Activated B cell treated with CpG ODN at 0.5 μM for 24 hours (primary cell): ENCODE measurements at regions of chr2 and their contacts with region 1.

Region 1: GRCh38 chr2:55519938-55520885 is 694 bp downstream of the CFAP36 start:
- DNase-seq: peak; percentile 17
- ATAC-seq: peak; percentile 10
- H3K4me3 Mint-ChIP-seq: peak overlapping the region; percentile 98
- H3K27ac Mint-ChIP-seq: peak overlapping the region; percentile 96
- H3K4me1 Mint-ChIP-seq: peaks cover 16% of the 10 kb centered on the region
- H3K27me3 Mint-ChIP-seq: no peaks in the 10 kb centered on the region
- CTCF ChIP-seq: no peak

Region 2: DNA sequence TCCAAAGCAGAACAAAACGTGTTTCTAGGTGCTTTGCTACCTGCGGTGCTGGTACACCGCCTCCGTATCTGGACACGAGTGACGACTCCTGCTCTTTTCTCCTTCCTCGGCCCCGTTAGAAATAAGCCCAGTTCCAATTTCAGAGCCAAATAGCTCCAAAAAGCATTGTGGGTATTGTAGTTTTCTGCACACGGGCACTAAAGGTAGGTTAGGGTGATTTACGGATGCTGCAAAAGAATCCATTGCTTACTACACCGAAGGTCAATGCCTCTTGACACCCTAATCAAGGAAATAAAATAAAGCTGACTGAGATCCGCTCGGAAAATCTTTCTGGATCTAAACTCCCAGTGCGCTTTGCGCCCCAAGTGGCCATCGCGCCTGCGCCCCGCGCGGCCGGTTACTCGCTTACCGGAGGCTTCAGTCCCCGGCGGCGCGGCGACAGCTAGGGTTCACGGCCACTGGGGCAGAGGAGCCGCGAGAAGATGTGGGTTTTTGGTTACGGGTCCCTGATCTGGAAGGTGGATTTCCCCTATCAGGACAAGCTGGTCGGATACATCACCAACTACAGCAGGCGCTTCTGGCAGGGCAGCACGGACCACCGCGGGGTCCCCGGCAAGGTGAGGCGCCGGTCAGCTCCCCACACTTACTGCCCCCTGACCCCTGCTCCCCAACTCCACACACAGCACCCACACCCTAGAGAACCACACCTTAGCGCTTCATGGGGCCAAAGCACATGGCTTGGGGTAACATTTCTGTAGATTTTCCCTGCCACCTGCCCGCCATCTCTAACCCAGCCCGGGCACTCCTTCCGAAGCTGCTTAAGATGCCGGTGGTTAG is 1752.6 kb before region 1 on chr2 and contains the start of gene CHAC2:
- CTCF ChIA-PET with region 1: no interaction called
- POLR2A ChIA-PET with region 1: interaction called, 9 read pairs
- intact Hi-C with region 1: loop called (anchors 5 kb)
- DNase-seq: peak; percentile 82
- ATAC-seq: peak; percentile 92
- H3K4me3 Mint-ChIP-seq: peak within 1 kb of the TSS; percentile 95
- H3K27ac Mint-ChIP-seq: peak within 1 kb of the TSS; percentile 99
- H3K4me1 Mint-ChIP-seq: peaks cover 21% of the 10 kb centered on the region
- H3K27me3 Mint-ChIP-seq: no peaks in the 10 kb centered on the region
- CTCF ChIP-seq: no peak
- total RNA-seq, gene CHAC2: 7.0 and 7.6 TPM in 2 replicates

Region 3: GRCh38 chr2:54115284-54116137 is 1404.7 kb before region 1 on chr2 and contains the start of gene ACYP2:
- CTCF ChIA-PET with region 1: no interaction called
- POLR2A ChIA-PET with region 1: interaction called, 4 read pairs
- intact Hi-C with region 1: loop called (anchors 10 kb)
- DNase-seq: peak; percentile 89
- ATAC-seq: peak; percentile 84
- H3K4me3 Mint-ChIP-seq: peak within 1 kb of the TSS; percentile 97
- H3K27ac Mint-ChIP-seq: peak within 1 kb of the TSS; percentile 100
- H3K4me1 Mint-ChIP-seq: peaks cover 26% of the 10 kb centered on the region
- H3K27me3 Mint-ChIP-seq: no peaks in the 10 kb centered on the region
- CTCF ChIP-seq: no peak
- total RNA-seq, gene ACYP2: 14.9 and 15.9 TPM in 2 replicates

Region 4: DNA sequence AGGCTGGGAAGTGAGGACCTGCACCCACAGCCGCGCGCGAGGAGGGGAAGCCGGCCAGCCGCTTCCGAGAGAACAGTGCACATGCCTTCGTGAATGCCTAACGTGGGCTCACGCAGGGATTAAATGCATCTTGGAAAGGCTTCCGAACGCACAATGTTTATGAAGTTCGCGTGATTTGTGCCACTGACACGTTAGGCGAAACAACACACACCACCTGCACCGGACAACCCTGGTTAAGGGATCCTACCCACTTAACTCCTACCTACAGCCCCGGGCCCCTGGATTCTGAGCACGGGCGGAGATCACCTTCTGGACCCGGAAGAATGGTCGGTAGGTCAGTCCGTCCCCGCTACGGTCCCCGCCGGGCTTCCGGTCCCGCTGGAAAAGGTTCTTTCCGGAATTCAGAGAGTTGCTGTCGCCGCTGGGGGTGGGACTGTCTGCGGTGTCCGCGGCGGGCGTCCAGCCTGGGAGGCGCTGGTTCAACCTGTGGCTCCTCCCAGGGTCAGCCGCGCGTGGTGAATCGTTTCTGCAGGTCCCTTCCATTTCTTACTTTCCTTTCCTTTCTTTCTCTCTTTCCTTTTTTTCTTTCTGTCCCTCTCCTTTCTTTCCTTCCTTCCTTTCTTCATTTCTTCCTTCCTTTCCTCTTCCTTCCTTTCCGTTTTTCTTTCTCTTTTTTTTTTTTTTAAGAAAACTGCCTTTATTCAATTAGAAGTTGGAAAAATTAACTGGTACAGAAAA is 251.1 kb before region 1 on chr2 and contains the start of gene MTIF2:
- CTCF ChIA-PET with region 1: no interaction called
- POLR2A ChIA-PET with region 1: no interaction called
- intact Hi-C with region 1: loop called (anchors 1 kb)
- DNase-seq: peak; percentile 88
- ATAC-seq: peak; percentile 96
- H3K4me3 Mint-ChIP-seq: peak within 1 kb of the TSS; percentile 94
- H3K27ac Mint-ChIP-seq: peak within 1 kb of the TSS; percentile 94
- H3K4me1 Mint-ChIP-seq: peaks cover 13% of the 10 kb centered on the region
- H3K27me3 Mint-ChIP-seq: no peaks in the 10 kb centered on the region
- CTCF ChIP-seq: no peak
- total RNA-seq, gene MTIF2: 37.8 and 40.4 TPM in 2 replicates

Region 5: GRCh38 chr2:55419679-55420438 is 100.4 kb before region 1 on chr2 and contains the start of gene CCDC88A:
- CTCF ChIA-PET with region 1: no interaction called
- POLR2A ChIA-PET with region 1: interaction called, 5 read pairs
- intact Hi-C with region 1: loop called (anchors 2 kb)
- DNase-seq: peak; percentile 86
- ATAC-seq: peak; percentile 87
- H3K4me3 Mint-ChIP-seq: peak within 1 kb of the TSS; percentile 95
- H3K27ac Mint-ChIP-seq: peak within 1 kb of the TSS; percentile 92
- H3K4me1 Mint-ChIP-seq: peaks cover 46% of the 10 kb centered on the region
- H3K27me3 Mint-ChIP-seq: no peaks in the 10 kb centered on the region
- CTCF ChIP-seq: no peak
- total RNA-seq, gene CCDC88A: 25.6 and 35.6 TPM in 2 replicates